ENCODE measurements at regions of chr19 and their contacts with region 1.

Region 1: DNA sequence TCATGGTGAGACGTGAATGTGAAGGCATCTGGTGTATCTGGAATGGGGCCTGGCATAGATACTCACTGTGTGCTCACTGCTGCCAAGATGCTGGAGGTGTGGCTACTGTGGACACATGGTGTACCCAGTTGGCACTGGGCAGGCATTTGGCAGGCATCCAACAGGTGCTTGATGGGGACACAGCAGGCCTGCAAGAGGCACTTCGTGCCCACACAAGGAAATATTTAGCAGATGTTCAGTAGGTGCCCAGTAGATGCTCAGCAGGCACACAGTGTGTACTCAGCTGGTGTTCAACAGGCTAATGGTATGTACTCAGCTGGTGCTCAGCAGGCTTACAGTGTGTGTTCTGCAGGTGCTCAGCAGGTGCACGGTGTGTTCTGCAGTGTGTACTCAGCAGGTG is 14.2 kb downstream of the CRTC1 start:
- DNase-seq: no peak
- H3K27ac ChIP-seq: no peak overlapping the region
- CTCF ChIP-seq: no peak

Region 2: GRCh38 chr19:18594096-18594823 is 103.4 kb before region 1 on chr19:
- CTCF ChIA-PET with region 1: no interaction called
- POLR2A ChIA-PET with region 1: no interaction called
- DNase-seq: peak; percentile 76
- H3K27ac ChIP-seq: peak overlapping the region; percentile 96
- CTCF ChIP-seq: peak; percentile 98

Region 3: DNA sequence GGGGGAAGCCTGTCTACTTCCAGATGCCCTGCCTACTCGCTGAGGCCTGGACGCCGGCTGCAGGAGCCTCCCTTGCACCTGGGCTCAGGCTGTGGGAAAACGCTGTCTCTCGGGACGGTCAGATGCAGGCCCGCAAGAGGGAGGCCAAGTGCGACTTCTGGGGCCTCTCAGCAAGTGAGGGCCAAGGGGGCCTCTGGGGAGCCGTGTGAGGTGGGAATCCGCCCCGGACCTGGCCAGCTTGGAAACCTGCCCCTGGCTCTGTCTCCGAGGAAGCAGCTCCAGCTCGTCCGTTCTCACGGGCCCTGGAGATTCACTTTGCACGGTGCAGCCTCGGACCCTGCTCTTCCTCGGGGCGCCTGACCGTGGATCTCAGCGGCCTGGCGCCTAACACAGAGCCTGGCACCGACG is 25.6 kb before region 1 on chr19:
- CTCF ChIA-PET with region 1: no interaction called
- POLR2A ChIA-PET with region 1: interaction called, 18 read pairs
- DNase-seq: no peak
- H3K27ac ChIP-seq: peak overlapping the region; percentile 39
- CTCF ChIP-seq: no peak

Region 4: DNA sequence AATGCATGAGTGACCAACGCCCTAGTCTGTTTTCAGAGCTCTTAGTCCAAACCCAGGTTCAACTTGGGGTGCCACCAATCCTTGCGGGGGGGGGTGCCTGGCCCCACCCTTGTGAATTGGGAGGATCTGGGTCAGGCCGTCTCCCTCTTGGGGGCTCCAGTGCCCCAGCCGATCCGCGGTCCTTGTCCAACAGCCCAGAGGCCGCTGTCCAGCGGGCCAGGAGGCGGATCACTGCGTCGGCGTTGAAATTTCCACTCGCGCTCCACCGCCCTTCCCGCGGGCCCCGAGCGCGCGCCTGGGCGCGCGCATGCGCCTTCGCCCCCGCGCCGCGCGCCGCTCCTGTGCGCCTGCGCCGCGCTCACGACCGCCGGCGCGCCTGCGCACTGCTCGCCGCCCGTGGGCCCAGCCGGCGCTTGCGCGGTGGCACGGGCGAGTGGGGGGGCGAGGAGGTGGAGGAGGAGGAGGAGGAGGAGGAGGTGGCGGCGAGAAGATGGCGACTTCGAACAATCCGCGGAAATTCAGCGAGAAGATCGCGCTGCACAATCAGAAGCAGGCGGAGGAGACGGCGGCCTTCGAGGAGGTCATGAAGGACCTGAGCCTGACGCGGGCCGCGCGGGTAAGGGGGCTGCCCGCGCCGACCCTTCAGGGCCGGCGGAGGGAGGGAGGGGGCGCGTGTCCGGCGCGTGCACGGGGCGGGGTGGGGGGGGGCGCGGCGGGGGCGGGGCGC is 14.3 kb before region 1 on chr19 and contains the start of gene CRTC1:
- CTCF ChIA-PET with region 1: no interaction called
- POLR2A ChIA-PET with region 1: no interaction called
- DNase-seq: peak; percentile 98
- H3K27ac ChIP-seq: peak within 1 kb of the TSS; percentile 83
- CTCF ChIP-seq: no peak

Region 5: DNA sequence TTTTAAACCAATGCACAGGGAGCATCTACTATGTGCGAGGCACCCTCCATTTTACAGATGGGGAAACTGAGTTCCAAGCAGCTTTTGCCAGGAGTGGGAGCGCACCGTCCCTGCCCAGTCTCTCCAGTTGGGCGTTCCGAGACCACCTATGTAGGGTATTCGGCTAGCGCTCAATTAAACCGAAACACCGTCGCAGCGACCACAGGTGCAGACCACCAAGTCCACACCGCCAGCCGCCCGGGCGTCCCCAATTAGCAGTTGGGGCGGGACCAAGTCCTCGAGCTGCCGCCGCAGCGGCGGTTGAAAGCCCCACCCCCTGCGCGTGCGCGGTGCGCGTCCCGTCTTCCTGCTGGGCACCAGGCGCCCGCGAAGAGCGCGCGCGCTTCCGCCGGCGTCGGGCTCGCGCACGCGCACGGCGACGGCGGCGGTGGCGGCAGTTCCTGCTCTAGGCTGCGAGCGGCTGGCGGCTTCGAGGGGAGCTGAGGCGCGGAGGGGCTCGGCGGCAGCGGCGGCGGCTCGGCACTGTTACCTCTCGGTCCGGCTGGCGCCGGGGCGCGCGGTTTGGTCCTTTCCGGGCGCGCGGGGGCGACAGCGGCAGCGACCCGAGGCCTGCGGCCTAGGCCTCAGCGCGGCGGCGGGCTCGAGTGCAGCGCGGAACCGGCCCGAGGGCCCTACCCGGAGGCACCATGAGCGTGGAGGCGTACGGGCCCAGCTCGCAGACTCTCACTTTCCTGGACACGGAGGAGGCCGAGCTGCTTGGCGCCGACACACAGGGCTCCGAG is 134.0 kb after region 1 on chr19 and contains the start of gene UPF1:
- CTCF ChIA-PET with region 1: no interaction called
- POLR2A ChIA-PET with region 1: no interaction called
- DNase-seq: peak; percentile 91
- H3K27ac ChIP-seq: peak within 1 kb of the TSS; percentile 79
- CTCF ChIP-seq: no peak